ENCODE measurements at regions of chr5 and their contacts with region 1.

Region 1: GRCh38 chr5:5492087-5492933 is 69.8 kb downstream of the ICE1 start:
- DNase-seq: no peak
- H3K4me3 ChIP-seq: no peak overlapping the region
- H3K27ac ChIP-seq: no peak overlapping the region
- H3K4me1 ChIP-seq: peaks cover 0 to 17% (median 15%) of the 10 kb centered on the region in 4 donors
- H3K27me3 ChIP-seq: no peaks in the 10 kb centered on the region
- CTCF ChIP-seq: peak; percentile 37 to 67 (median 54)
- EP300 ChIP-seq: no peak
- POLR2A ChIP-seq: no peak

Region 2: DNA sequence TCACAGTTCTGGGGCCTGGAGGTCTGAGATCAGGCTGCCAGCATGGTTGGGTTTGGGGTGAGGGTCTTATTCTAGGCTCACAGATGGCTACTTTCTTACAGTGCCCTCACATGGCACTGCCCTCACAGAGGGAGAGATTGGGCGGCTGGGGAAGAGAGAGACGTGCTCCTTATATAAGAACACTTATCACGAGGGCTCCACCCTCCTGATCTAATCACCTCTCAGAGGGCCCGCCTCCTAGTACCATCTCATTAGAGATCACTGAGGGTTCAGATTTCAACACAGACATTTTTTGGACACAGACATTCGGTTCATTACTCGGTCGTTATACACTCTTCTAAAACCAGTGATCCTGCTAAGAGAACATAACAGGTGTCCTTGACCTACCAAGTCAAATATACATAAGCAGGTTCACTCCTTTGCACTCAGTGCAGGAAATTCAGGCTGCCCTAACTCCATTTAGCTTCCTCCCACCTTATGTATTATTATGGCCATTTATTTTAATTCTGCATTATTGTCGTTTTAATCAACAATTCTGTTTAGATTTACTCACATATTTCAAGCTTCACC is 51.9 kb after region 1 on chr5:
- intact Hi-C with region 1: no loop called
- DNase-seq: no peak
- H3K4me3 ChIP-seq: no peak overlapping the region
- H3K27ac ChIP-seq: no peak overlapping the region
- H3K4me1 ChIP-seq: no peaks in the 10 kb centered on the region
- H3K27me3 ChIP-seq: no peaks in the 10 kb centered on the region
- CTCF ChIP-seq: no peak
- EP300 ChIP-seq: no peak
- POLR2A ChIP-seq: no peak

Region 3: GRCh38 chr5:5649641-5650040 is 157.3 kb after region 1 on chr5:
- intact Hi-C with region 1: loop called (anchors 10 kb)
- DNase-seq: no peak
- H3K4me3 ChIP-seq: no peak overlapping the region
- H3K27ac ChIP-seq: peak overlapping the region in 1 of 4 donors; percentile 20
- H3K4me1 ChIP-seq: peaks cover 0 to 16% (median 7%) of the 10 kb centered on the region in 4 donors
- H3K27me3 ChIP-seq: no peaks in the 10 kb centered on the region
- CTCF ChIP-seq: no peak
- EP300 ChIP-seq: no peak
- POLR2A ChIP-seq: no peak

Region 4: DNA sequence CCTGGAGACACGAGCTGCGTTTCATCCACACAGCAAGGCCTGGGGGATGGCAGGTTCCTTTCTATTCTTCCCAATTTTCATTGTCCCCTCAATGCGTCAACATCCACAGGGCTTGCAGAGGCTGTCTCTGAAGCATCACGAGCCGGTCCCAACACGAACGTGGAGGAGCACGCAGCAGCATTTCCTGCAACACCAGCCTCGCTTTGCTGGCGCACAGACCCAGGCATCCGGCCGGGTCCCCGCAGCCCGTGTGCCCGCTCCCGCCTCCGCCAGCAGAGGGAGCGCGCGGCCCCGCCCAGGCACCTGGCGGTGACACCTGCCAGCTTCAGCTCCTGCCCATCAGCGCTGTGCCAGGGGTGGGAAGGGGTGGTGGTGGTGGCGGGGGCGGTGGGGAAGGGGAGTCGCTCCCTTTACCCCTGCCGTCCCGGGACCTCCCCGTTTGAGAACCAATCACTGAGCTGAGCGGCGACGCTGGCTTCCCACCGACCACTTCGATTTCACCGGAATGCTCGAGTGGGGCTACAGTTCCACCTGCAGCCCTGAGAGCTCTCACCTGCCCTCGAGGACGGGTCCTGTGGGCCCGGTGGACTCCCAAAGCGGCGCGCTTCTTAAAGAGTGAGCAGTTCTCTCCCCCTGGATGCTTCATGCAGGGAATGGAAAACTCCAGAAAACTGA is 394.6 kb after region 1 on chr5:
- intact Hi-C with region 1: loop called (anchors 10 kb)
- DNase-seq: no peak
- H3K4me3 ChIP-seq: no peak overlapping the region
- H3K27ac ChIP-seq: no peak overlapping the region
- H3K4me1 ChIP-seq: peaks cover 0 to 7% (median 0%) of the 10 kb centered on the region in 4 donors
- H3K27me3 ChIP-seq: peaks cover 0 to 11% (median 4%) of the 10 kb centered on the region in 3 donors
- CTCF ChIP-seq: peak in 2 of 4 experiments; percentile 5 to 51
- EP300 ChIP-seq: no peak
- POLR2A ChIP-seq: no peak

Region 5: GRCh38 chr5:6080930-6081726 is 588.8 kb after region 1 on chr5:
- intact Hi-C with region 1: no loop called
- DNase-seq: no peak
- H3K4me3 ChIP-seq: no peak overlapping the region
- H3K27ac ChIP-seq: no peak overlapping the region
- H3K4me1 ChIP-seq: no peaks in the 10 kb centered on the region
- H3K27me3 ChIP-seq: no peaks in the 10 kb centered on the region
- CTCF ChIP-seq: no peak
- EP300 ChIP-seq: no peak
- POLR2A ChIP-seq: no peak

Region 6: GRCh38 chr5:6583049-6583880 is 1091.0 kb after region 1 on chr5:
- intact Hi-C with region 1: loop called (anchors 2 kb)
- DNase-seq: no peak
- H3K4me3 ChIP-seq: peak overlapping the region; percentile 28 to 56 (median 47)
- H3K27ac ChIP-seq: peak overlapping the region in 2 of 4 donors; percentile 23 to 36
- H3K4me1 ChIP-seq: peaks cover 0 to 12% (median 10%) of the 10 kb centered on the region in 4 donors
- H3K27me3 ChIP-seq: peaks cover 0 to 4% (median 0%) of the 10 kb centered on the region in 3 donors
- CTCF ChIP-seq: peak in 2 of 4 experiments; percentile 19 to 54
- EP300 ChIP-seq: no peak
- POLR2A ChIP-seq: no peak

Region 7: DNA sequence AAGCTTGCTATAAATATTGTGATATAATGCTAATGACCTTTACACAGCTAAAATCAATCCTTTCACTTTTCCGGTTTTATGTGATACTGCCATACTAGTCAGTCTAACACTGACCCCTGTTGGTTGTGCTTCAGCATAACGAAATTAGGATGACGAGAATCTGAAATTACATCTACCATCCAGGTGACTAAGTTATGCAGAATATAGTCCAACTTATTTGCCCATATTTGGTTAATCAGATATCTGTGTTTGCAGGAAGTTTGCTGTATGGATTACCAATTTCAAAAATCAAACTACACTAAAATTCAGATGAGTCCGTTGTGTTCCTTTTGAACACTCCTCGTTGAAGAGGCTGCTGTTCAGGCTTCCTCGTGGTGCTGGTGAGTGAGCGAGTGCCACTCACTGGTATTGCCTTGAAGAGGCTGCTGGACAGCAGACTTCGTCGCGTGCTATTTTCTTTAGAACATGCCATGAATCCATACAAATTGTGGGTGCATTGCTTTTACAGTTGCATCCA is 1253.5 kb after region 1 on chr5:
- intact Hi-C with region 1: loop called (anchors 5 kb)
- DNase-seq: peak; percentile 18
- H3K4me3 ChIP-seq: no peak overlapping the region
- H3K27ac ChIP-seq: peak overlapping the region in 2 of 4 donors; percentile 24 to 61
- H3K4me1 ChIP-seq: peaks cover 0 to 6% (median 4%) of the 10 kb centered on the region in 4 donors
- H3K27me3 ChIP-seq: no peaks in the 10 kb centered on the region
- CTCF ChIP-seq: peak; percentile 53 to 79 (median 76)
- EP300 ChIP-seq: no peak
- POLR2A ChIP-seq: no peak

Measured in sigmoid colon (tissue), 7 donors.